Left colon (tissue), 2 donors: ENCODE measurements at regions of chr2 and their contacts with region 1.

Region 1: DNA sequence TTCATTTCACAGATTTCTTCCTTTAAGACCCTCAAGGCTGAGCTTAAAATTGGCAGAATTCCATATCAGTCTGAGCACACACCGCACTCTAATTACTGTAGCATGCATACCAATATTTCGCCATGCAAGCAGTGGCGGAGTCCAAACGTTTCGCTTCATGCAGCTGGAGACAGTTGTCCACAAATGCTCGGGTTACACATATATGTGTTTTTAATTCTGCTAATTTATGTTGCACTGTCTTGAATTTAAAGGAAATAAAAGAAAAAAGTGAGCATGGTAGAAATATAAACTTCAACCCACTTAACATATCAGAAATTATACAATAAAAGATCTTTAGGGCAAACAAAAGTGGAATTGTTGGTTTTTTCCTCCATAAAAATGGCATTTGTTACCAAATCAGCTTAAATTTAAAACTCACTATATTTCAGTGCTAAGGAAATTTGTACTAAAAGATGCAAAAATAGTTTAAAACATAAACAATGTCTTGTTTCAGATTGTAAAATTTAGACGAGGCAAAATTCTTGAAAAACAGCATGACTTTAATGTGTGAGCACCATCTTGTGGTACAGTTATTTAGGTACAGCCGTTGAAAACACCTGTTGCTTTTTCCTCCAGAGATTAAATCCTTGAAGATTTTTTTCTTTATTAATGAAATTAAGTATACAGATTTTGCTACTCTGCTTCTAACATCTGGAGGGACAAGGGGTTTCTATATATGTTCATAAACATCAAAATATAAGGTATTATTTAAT is 24.1 kb upstream of the KANSL1L start:
- DNase-seq: peak in 1 of 2 donors; percentile 7
- ATAC-seq: peak; percentile 53

Region 2: DNA sequence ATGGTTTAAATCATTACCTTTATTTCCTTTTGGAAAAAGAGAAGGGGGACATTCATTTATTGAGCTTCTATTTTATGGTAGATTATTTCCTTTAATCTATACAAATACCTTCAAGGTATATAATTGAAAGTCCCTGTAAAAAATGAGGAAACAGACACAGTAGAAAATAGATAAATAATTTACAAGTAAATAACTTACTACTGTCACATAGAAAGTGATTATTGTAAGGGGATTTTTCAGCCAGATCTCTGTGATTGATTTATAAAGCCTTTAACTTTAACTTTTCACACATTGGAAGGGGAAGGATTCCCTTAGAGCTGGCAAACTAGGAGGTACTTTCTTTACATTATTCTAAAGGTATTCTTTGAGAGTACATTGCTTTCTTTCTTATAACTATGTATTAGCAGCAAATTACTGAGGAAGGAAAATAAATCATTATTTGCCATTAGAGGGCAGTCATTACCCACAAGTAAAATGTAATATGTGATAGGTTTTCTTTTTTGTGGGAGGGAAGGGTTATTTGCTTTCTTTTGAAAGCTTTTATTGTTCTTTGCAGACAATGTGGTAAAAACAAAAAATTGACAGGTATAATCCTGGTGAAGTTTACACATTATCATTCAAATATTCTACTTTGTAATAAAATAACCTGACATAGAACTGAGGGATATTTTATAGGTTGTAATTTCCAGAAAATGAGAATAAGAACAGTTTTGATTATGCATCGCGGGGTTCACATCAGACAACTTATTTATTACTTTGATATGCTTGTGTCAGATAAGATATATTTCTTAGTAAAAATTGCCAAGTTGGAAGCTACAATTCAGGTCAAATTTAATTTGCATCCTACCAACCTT is 217.7 kb before region 1 on chr2:
- intact Hi-C with region 1: loop called (anchors 5 to 10 kb)
- DNase-seq: no peak
- ATAC-seq: no peak

Region 3: GRCh38 chr2:210046851-210047500 is 148.3 kb before region 1 on chr2:
- intact Hi-C with region 1: no loop called
- DNase-seq: no peak
- ATAC-seq: peak; percentile 40

Region 4: DNA sequence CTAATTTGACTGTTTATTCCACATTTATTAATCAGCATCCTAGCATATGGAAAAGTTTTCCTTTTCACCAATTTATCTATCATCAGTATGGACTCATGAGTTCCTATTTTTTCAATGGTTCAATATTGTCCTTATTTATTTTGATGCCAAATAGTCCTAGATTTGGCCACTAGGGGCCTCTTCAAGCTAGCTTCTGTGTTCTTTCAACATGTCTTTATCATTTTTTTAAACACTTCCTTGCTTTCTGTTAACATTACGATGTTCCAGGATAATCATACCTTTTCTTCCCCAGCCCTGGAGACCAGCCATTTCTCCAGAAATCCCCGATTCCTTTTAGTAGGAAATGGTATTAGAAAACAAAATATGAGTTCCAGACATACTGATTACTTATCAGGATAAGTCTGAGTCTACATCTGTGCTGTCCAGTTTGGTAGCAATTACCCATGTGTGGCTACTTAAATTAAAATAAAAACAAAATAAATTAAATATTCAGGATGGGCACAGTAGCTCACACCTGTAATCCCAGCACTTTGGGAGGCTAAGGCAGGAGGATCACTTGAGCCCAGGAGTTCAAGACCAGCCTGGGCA is 122.3 kb before region 1 on chr2:
- intact Hi-C with region 1: loop called in 1 of 2 experiments (anchors 2 kb)
- DNase-seq: no peak
- ATAC-seq: peak; percentile 56

Region 5: DNA sequence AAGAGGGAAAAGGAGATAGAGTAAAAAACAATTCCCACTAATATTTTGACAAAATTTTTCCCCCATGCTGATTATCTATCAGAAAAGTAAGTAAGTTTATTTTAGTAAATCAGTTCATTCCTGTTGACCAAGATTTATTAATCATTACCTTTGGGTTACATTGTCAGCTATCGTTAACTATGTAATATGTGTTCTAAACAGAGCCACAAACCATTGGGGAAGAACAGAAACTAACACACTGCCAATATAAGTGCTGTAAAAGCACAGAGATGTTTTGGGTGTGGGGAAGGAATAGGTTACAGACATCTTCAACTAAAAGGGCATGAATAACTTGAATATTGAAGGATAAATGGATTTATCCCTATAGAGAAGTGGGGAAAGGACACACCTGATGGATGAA is 72.4 kb after region 1 on chr2:
- intact Hi-C with region 1: no loop called
- DNase-seq: no peak
- ATAC-seq: no peak